WTC11 (cell line): ENCODE measurements at regions of chr2 and their contacts with region 1.

Region 1: DNA sequence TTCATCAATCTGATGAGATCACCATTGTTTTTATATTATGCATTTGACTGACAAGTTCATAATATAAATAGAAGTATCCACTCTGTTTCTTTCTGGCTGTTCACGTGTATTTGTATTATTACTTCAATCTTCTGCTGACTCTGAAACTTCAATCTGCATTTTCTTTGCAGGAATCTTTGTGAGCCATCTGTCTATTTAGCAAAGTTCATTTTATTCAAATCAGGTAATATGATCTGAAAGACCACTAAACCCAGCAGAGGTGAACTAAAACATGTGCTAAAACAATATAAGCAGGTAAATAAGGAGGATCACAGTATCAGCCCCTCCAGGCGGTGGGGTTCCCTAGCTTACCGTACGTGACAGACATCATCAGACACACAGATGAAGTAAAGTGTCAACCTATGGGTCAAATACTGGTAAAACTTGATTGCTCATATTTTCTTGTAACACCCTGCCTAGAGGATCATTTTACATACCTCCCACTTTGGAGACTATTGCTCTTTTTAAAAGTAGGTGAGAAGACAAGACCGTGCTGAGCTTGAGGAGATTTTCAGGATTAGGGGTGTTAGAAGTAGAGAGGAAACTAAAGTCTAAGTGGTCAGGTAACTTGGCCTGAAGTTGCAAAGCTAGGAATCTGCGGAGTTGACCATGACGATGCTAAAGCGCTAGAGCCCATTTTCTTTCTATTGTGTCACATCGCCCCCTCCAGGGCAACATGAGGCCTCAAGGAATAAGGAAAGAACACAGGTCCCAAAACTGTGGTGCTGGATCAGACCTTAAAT is 9.0 kb downstream of the DTNB start:
- DNase-seq: peak; percentile 69
- ATAC-seq: peak; percentile 92
- H3K4me3 Mint-ChIP-seq: no peak overlapping the region; the same call in 1 of the 2 replicates
- H3K27ac Mint-ChIP-seq: peak overlapping the region; percentile 68
- H3K4me1 Mint-ChIP-seq: peaks cover 26% of the 10 kb centered on the region
- H3K27me3 Mint-ChIP-seq: no peaks in the 10 kb centered on the region
- CTCF ChIP-seq: no peak; the same call in 1 of the 2 replicates

Region 2: GRCh38 chr2:25376750-25377621 is 287.4 kb before region 1 on chr2:
- CTCF ChIA-PET with region 1: interaction called, 13 read pairs
- POLR2A ChIA-PET with region 1: no interaction called
- DNase-seq: peak; percentile 92
- ATAC-seq: peak; percentile 95
- H3K4me3 Mint-ChIP-seq: peak overlapping the region; percentile 52
- H3K27ac Mint-ChIP-seq: peak overlapping the region; percentile 48; the same call in 1 of the 2 replicates
- H3K4me1 Mint-ChIP-seq: peaks cover 16% of the 10 kb centered on the region
- H3K27me3 Mint-ChIP-seq: peaks cover 26% of the 10 kb centered on the region
- CTCF ChIP-seq: peak; percentile 91

Region 3: GRCh38 chr2:25606892-25607291 is 57.5 kb before region 1 on chr2:
- CTCF ChIA-PET with region 1: interaction called, 90 read pairs
- POLR2A ChIA-PET with region 1: no interaction called
- DNase-seq: no peak
- ATAC-seq: no peak
- H3K4me3 Mint-ChIP-seq: no peak overlapping the region
- H3K27ac Mint-ChIP-seq: no peak overlapping the region
- H3K4me1 Mint-ChIP-seq: no peaks in the 10 kb centered on the region; the same call in 1 of the 2 replicates
- H3K27me3 Mint-ChIP-seq: no peaks in the 10 kb centered on the region
- CTCF ChIP-seq: 0 out of 2 replicates have a peak, but pooled peaks have one; percentile 21

Region 4: DNA sequence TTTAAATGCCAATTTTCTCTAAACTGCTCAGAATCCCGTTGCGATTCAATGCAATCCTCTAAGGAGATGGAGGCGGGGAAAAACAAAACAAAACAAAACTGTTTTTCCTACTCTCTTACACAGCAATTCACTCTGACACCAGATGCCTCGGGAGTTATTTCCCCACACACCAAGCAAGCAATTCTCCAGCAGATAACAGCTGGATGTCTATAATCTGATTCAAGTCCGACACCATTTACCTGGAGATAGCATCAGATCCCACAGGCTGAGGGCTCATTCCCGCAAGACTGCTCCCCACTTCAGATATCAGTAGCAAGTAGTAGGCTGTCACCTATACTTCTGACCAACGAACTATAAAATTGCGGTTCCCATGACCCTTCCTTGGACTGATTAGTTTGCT is 49.7 kb before region 1 on chr2:
- CTCF ChIA-PET with region 1: interaction called, 21 read pairs
- POLR2A ChIA-PET with region 1: no interaction called
- DNase-seq: no peak
- ATAC-seq: no peak
- H3K4me3 Mint-ChIP-seq: no peak overlapping the region
- H3K27ac Mint-ChIP-seq: no peak overlapping the region
- H3K4me1 Mint-ChIP-seq: peaks cover 16% of the 10 kb centered on the region
- H3K27me3 Mint-ChIP-seq: no peaks in the 10 kb centered on the region
- CTCF ChIP-seq: no peak

Region 5: GRCh38 chr2:25651071-25651470 is 13.3 kb before region 1 on chr2:
- CTCF ChIA-PET with region 1: interaction called, 15 read pairs
- POLR2A ChIA-PET with region 1: interaction called, 4 read pairs
- DNase-seq: no peak
- ATAC-seq: no peak
- H3K4me3 Mint-ChIP-seq: no peak overlapping the region
- H3K27ac Mint-ChIP-seq: no peak overlapping the region; the same call in 1 of the 2 replicates
- H3K4me1 Mint-ChIP-seq: no peaks in the 10 kb centered on the region
- H3K27me3 Mint-ChIP-seq: no peaks in the 10 kb centered on the region
- CTCF ChIP-seq: no peak

Region 6: GRCh38 chr2:25700221-25700660 is 35.9 kb after region 1 on chr2:
- CTCF ChIA-PET with region 1: interaction called, 48 read pairs
- POLR2A ChIA-PET with region 1: no interaction called
- DNase-seq: no peak
- ATAC-seq: peak; percentile 54
- H3K4me3 Mint-ChIP-seq: no peak overlapping the region
- H3K27ac Mint-ChIP-seq: no peak overlapping the region
- H3K4me1 Mint-ChIP-seq: no peaks in the 10 kb centered on the region
- H3K27me3 Mint-ChIP-seq: no peaks in the 10 kb centered on the region; the same call in 1 of the 2 replicates
- CTCF ChIP-seq: peak; percentile 53

Region 7: DNA sequence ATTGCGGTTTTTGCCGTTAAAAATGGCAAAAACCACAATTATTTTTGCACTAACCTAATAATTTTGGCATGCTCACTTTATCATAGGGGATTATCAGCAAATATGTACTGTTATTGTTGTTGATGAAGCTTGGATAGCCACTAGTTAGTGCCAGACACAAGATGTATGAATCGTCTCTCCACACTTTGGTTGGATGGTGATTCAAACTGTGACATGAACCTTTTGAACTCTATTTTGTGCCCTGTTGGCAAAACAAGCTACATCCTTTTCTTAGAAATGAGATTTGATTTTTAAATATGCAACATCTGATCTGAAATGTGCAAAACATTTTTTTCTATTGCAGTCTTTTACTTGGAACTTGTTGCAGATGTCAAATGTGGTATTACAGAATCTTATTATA is 57.9 kb after region 1 on chr2:
- CTCF ChIA-PET with region 1: no interaction called
- POLR2A ChIA-PET with region 1: no interaction called
- DNase-seq: no peak
- ATAC-seq: no peak
- H3K4me3 Mint-ChIP-seq: no peak overlapping the region
- H3K27ac Mint-ChIP-seq: no peak overlapping the region
- H3K4me1 Mint-ChIP-seq: peaks cover 2% of the 10 kb centered on the region
- H3K27me3 Mint-ChIP-seq: no peaks in the 10 kb centered on the region
- CTCF ChIP-seq: no peak